Endothelial cell of umbilical vein (primary cell): ENCODE measurements at regions of chr14 and their contacts with region 1.

Region 1: GRCh38 chr14:57382283-57382682 is 8.1 kb upstream of the NAA30 start:
- DNase-seq: peak; percentile 81
- H3K4me3 ChIP-seq: no peak overlapping the region
- H3K27ac ChIP-seq: peak overlapping the region; percentile 76
- H3K4me1 ChIP-seq: peaks cover 18% of the 10 kb centered on the region
- H3K27me3 ChIP-seq: no peaks in the 10 kb centered on the region
- CTCF ChIP-seq: no peak
- POLR2A ChIP-seq: peak; percentile 32

Region 2: DNA sequence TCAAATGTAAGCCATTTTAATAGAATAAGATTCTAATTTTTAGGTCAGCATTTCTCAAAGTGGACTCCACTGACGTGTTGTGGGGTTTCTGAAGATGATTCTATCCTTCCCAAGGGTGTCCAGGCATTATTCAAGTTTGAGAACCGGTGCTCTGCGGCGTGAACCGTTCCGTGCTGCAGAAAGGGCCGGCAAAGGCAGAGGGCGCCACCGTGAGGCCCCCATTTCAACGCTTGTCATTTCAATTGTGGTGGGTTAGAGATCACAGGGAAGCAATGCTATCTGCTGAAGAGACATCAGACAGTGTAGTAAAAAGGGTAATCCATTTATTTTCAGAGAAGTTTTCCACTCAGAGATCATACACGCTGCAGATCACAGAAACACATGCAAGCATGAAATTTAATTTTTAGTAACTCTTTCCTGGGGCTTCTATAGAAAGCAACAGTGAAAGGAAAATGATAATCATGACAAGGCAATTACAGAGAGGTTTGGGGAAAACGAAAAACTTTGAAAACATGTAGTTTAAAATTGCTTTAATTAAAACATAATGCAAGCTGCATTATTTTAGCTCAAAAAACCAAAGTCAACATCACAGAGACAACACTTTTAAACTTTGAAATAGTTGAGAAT is 315.3 kb before region 1 on chr14:
- CTCF ChIA-PET with region 1: interaction called, 4 read pairs
- POLR2A ChIA-PET with region 1: no interaction called
- dilution Hi-C with region 1: no loop called
- intact Hi-C with region 1: loop called (anchors 1 kb)
- DNase-seq: peak; percentile 37
- H3K4me3 ChIP-seq: no peak overlapping the region
- H3K27ac ChIP-seq: no peak overlapping the region
- H3K4me1 ChIP-seq: no peaks in the 10 kb centered on the region
- H3K27me3 ChIP-seq: peaks cover 4 to 17% of the 10 kb centered on the region in 2 experiments
- CTCF ChIP-seq: peak; percentile 57 to 68
- POLR2A ChIP-seq: no peak

Region 3: DNA sequence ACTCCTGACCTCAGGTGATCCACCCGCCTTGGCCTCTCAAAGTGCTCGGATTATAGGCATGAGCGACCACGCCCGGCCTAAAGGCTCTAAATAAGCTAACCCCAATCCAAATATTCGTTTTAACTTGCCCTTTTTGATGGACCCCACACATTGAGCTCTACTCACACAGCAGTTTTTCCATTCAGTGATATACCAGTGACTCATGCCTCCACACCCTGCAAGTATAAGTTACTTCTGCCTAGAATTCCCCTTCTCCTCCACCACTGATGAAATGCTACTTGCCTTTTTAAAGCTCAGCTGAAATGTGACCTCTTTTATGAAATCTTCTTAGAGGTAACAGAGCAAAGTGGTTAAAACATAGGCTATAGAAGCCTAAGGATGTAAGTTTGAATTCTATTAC is 182.4 kb before region 1 on chr14:
- CTCF ChIA-PET with region 1: no interaction called
- POLR2A ChIA-PET with region 1: no interaction called
- dilution Hi-C with region 1: no loop called
- intact Hi-C with region 1: loop called (anchors 5 kb)
- DNase-seq: no peak
- H3K4me3 ChIP-seq: no peak overlapping the region
- H3K27ac ChIP-seq: no peak overlapping the region
- H3K4me1 ChIP-seq: no peaks in the 10 kb centered on the region
- H3K27me3 ChIP-seq: peaks cover 0 to 4% of the 10 kb centered on the region in 2 experiments
- CTCF ChIP-seq: no peak
- POLR2A ChIP-seq: no peak

Region 4: GRCh38 chr14:57293866-57294837 is 88.1 kb before region 1 on chr14:
- CTCF ChIA-PET with region 1: interaction called, 15 read pairs
- POLR2A ChIA-PET with region 1: no interaction called
- dilution Hi-C with region 1: no loop called
- intact Hi-C with region 1: no loop called
- DNase-seq: peak; percentile 34
- H3K4me3 ChIP-seq: no peak overlapping the region
- H3K27ac ChIP-seq: no peak overlapping the region
- H3K4me1 ChIP-seq: no peaks in the 10 kb centered on the region
- H3K27me3 ChIP-seq: no peaks in the 10 kb centered on the region
- CTCF ChIP-seq: no peak
- POLR2A ChIP-seq: no peak

Region 5: DNA sequence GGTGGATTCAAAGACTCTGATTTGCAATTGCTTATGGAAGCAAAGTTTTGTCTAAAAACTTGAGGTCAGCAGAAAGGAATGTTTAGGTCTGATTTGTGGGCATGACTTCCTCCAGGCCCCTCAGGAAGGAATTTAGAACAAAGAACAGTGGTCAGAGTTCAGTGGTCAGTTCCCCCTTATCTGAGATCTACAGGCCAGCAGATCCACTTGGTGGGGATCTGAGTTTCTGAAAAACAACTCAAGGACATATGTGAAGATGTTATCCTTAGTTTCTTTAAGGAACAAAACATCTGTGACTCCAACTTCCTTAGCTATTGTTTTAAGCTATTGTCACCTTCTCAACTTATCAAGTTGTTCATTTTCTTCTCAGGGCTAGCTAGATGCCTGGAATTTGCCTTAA is 19.9 kb before region 1 on chr14:
- CTCF ChIA-PET with region 1: interaction called, 22 read pairs
- POLR2A ChIA-PET with region 1: interaction called, 5 read pairs
- dilution Hi-C with region 1: no loop called
- intact Hi-C with region 1: loop called (anchors 1 kb)
- DNase-seq: peak; percentile 94
- H3K4me3 ChIP-seq: no peak overlapping the region
- H3K27ac ChIP-seq: peak overlapping the region; percentile 89
- H3K4me1 ChIP-seq: peaks cover 28% of the 10 kb centered on the region
- H3K27me3 ChIP-seq: no peaks in the 10 kb centered on the region
- CTCF ChIP-seq: no peak
- POLR2A ChIP-seq: peak; percentile 77

Region 6: DNA sequence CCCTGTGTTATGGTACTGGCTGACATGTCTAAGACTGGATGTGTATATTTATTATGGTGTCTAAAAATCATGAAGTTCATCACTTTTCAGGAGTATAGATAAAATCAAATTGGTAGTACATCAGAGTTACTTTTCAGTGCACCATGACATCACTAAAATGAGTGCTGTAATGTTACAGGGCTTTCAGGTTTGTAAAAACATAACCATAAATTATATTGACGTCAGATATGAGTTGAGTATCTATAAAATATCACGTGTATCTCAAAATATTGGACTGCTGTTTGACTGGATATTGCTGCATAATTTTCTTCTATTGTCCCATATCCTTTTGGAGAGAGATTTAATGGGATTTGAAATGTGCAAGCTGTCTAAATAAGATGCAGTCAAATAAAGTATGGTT is 30.1 kb after region 1 on chr14:
- CTCF ChIA-PET with region 1: no interaction called
- POLR2A ChIA-PET with region 1: no interaction called
- dilution Hi-C with region 1: no loop called
- intact Hi-C with region 1: no loop called
- DNase-seq: peak; percentile 23
- H3K4me3 ChIP-seq: no peak overlapping the region
- H3K27ac ChIP-seq: no peak overlapping the region
- H3K4me1 ChIP-seq: peaks cover 3% of the 10 kb centered on the region
- H3K27me3 ChIP-seq: no peaks in the 10 kb centered on the region
- CTCF ChIP-seq: no peak
- POLR2A ChIP-seq: no peak

Region 7: DNA sequence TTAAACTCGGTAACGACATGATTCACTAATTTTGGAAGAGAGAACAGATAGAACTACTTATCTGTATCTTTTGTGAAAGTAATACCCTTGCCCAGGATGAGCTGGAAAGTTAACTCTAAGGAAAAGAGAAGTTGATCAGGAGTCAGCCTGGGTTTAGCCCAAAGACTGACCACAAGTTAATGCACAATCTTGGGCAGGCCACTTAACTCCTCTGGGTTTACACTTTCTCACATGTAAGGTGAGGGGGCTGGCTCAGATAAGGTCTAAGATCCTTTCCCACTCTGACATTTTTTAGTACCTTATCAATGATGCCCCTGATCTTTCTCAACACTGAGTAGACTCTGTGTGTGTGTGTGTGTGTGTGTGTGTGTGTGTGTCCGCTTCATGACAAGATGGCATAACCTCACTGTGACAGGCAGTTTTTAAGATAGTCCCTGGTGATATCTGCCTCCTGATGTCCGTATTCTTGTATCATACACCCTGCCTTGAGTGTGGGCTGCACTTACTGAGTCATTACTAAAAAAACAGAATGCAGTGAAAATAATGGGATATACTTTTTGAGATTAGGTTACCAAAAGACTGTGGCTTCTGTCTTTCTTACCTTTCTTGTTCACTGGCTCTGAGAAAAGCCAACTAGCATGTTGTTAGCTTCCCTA is 167.6 kb after region 1 on chr14:
- CTCF ChIA-PET with region 1: no interaction called
- POLR2A ChIA-PET with region 1: no interaction called
- dilution Hi-C with region 1: no loop called
- intact Hi-C with region 1: no loop called
- DNase-seq: no peak
- H3K4me3 ChIP-seq: no peak overlapping the region
- H3K27ac ChIP-seq: no peak overlapping the region
- H3K4me1 ChIP-seq: no peaks in the 10 kb centered on the region
- H3K27me3 ChIP-seq: no peaks in the 10 kb centered on the region
- CTCF ChIP-seq: no peak
- POLR2A ChIP-seq: no peak

Region 8: GRCh38 chr14:57714487-57714931 is 332.2 kb after region 1 on chr14:
- CTCF ChIA-PET with region 1: no interaction called
- POLR2A ChIA-PET with region 1: no interaction called
- dilution Hi-C with region 1: no loop called
- intact Hi-C with region 1: no loop called
- DNase-seq: no peak
- H3K4me3 ChIP-seq: no peak overlapping the region
- H3K27ac ChIP-seq: no peak overlapping the region
- H3K4me1 ChIP-seq: no peaks in the 10 kb centered on the region
- H3K27me3 ChIP-seq: peaks cover 0 to 4% of the 10 kb centered on the region in 2 experiments
- CTCF ChIP-seq: no peak
- POLR2A ChIP-seq: no peak

Region 9: DNA sequence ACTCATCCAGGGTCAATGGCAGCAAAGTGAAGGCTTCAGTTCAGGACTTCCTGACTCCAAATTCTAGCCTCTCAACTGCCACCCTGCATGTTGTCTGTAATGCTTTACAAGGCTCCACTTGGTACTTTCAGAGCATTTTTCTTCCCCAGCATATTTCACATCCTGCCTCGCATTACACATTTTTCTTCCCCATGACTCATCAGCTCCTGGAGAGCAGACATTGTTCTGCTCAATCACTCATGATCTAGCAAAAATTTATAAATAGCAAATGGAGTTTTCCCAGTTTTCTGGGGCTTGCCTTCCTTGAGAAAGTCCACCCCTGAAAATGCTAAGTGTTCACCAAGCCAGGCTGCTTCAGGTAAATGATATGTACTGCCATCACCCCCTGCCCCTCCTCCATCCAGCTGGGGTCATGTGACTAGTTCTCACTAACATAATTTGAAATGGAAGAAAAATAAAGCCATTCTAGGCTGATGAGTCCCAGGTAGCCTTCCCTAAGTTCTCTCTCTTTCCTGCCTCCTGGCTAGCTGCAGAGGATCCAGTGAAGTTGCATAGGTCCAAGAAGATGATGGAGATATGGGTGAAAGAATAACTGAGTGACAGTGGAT is 700.3 kb after region 1 on chr14:
- CTCF ChIA-PET with region 1: no interaction called
- POLR2A ChIA-PET with region 1: no interaction called
- dilution Hi-C with region 1: no loop called
- intact Hi-C with region 1: no loop called
- DNase-seq: peak; percentile 81
- H3K4me3 ChIP-seq: no peak overlapping the region
- H3K27ac ChIP-seq: peak overlapping the region; percentile 86
- H3K4me1 ChIP-seq: peaks cover 13% of the 10 kb centered on the region
- H3K27me3 ChIP-seq: peaks cover 3 to 13% of the 10 kb centered on the region in 2 experiments
- CTCF ChIP-seq: no peak
- POLR2A ChIP-seq: no peak